ENCODE measurements at regions of chr1 and their contacts with region 1.

Region 1: GRCh38 chr1:235415008-235415904 is 48.0 kb downstream of the TBCE start:
- DNase-seq: peak; percentile 68 to 69
- H3K4me3 ChIP-seq: no peak overlapping the region
- H3K27ac ChIP-seq: no peak overlapping the region
- H3K4me1 ChIP-seq: 0 out of 2 replicates have a peak, but pooled peaks cover 5% of the 10 kb centered on the region
- H3K27me3 ChIP-seq: no peaks in the 10 kb centered on the region
- CTCF ChIP-seq: peak; percentile 89

Region 2: GRCh38 chr1:234486498-234487448 is 928.5 kb before region 1 on chr1:
- CTCF ChIA-PET with region 1: no interaction called
- POLR2A ChIA-PET with region 1: no interaction called
- intact Hi-C with region 1: loop called (anchors 1 kb)
- DNase-seq: peak; percentile 49 to 73
- H3K4me3 ChIP-seq: no peak overlapping the region
- H3K27ac ChIP-seq: 0 out of 2 replicates have a peak overlapping the region, but pooled peaks have one; percentile 26
- H3K4me1 ChIP-seq: peaks cover 35% of the 10 kb centered on the region
- H3K27me3 ChIP-seq: no peaks in the 10 kb centered on the region
- CTCF ChIP-seq: peak; percentile 71

Region 3: DNA sequence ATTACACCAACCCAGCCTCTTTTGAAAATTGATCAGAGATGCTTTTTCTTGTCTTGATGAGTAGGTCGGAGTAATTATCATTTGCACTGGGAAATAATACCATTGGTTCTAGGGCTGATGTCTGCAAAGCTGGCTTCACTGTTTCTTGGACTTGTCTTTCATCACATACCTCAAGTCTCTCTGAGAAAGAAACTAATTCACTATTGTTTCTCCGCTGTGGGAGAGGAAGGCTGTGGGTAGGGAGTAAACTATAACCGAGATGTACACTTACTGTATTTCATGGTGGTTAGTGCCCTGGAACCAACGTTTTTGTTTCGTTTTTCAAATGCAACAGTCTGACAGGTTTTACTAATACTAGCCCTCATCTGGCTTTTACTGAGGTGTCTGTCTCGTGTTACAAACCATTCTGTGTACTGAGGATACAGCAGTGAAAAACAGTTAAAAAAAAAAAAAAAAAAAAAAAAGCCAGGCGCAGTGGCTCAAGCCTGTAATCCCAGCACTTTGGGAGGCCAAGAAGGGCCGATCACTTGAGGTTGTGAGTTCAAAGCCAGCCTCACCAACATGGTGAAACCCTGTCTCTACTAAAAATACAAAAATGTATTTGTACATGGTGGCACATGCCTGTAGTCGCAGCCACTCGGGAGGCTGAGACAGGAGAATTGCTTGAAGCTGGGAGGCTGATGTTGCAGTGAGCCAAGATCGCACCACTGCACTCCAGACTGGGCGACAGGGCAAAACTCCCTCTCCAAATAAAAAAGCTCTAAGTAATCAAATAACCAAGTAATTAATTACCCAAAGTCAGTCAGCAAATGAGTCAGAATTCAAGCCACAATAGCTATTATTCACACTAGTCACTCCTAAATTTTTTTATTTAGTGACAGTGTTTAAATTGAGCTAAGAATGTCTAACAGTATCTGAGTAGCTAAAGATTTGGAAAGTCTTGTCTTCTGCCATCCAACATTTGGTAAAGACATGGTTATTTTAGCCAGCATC is 309.9 kb before region 1 on chr1:
- CTCF ChIA-PET with region 1: interaction called, 7 read pairs
- POLR2A ChIA-PET with region 1: no interaction called
- intact Hi-C with region 1: loop called (anchors 1 kb)
- DNase-seq: no peak
- H3K4me3 ChIP-seq: no peak overlapping the region
- H3K27ac ChIP-seq: no peak overlapping the region
- H3K4me1 ChIP-seq: no peaks in the 10 kb centered on the region
- H3K27me3 ChIP-seq: no peaks in the 10 kb centered on the region
- CTCF ChIP-seq: no peak

Region 4: DNA sequence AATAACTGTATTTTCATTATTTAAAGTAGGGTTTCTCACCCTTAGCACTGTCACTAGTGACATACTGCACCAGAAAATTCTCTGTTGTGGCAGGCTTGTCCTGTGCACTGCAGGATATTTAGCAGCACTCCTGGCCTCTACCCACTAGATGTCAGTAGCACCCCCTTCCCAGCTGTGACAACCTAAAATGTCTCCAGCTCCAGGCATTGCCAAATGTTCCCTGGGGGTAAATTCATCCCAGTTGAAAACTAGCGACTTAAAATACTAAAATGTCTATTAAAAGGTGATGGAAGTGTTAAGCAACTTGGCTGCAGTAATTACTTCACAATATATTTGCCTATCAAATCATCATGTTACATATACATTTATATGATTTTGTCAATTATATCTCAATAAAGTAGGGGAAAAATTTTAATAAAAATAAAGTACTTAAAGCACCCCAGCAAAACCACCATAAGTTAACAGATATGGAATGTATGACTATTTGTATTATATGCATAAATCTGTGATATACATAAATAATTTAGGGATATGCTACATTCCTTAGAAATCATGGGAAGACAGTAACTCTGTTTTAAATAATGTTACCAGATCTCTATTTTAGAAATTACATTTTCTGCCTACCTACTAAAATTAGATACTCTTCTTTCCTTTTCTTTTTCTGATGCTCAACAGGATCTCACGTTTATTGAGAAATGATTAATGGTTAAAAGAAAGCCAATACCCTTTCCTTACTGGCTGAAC is 161.9 kb before region 1 on chr1:
- CTCF ChIA-PET with region 1: interaction called, 7 read pairs
- POLR2A ChIA-PET with region 1: no interaction called
- intact Hi-C with region 1: loop called (anchors 1 kb)
- DNase-seq: peak; percentile 68 to 71
- H3K4me3 ChIP-seq: no peak overlapping the region
- H3K27ac ChIP-seq: 0 out of 2 replicates have a peak overlapping the region, but pooled peaks have one; percentile 25
- H3K4me1 ChIP-seq: peaks cover 8% of the 10 kb centered on the region; the same call in 1 of the 2 replicates
- H3K27me3 ChIP-seq: no peaks in the 10 kb centered on the region
- CTCF ChIP-seq: peak; percentile 88

Measured in PC-9 (cell line).